Sigmoid colon (tissue), 7 donors: ENCODE measurements at regions of chr4 and their contacts with region 1.

Region 1: GRCh38 chr4:185656467-185656931 is 121.2 kb upstream of the PDLIM3 start:
- DNase-seq: peak; percentile 90
- H3K4me3 ChIP-seq: peak overlapping the region; percentile 56 to 61 (median 56)
- H3K27ac ChIP-seq: peak overlapping the region; percentile 80 to 88 (median 85)
- H3K4me1 ChIP-seq: peaks cover 0 to 53% (median 47%) of the 10 kb centered on the region in 4 donors
- H3K27me3 ChIP-seq: no peaks in the 10 kb centered on the region
- CTCF ChIP-seq: peak; percentile 52 to 66 (median 64)
- EP300 ChIP-seq: no peak
- POLR2A ChIP-seq: peak; percentile 61 to 66

Region 2: GRCh38 chr4:185500035-185500434 is 156.5 kb before region 1 on chr4:
- intact Hi-C with region 1: no loop called
- DNase-seq: no peak
- H3K4me3 ChIP-seq: no peak overlapping the region
- H3K27ac ChIP-seq: peak overlapping the region in 1 of 4 donors; percentile 17
- H3K4me1 ChIP-seq: peaks cover 0 to 12% (median 5%) of the 10 kb centered on the region in 4 donors
- H3K27me3 ChIP-seq: no peaks in the 10 kb centered on the region
- CTCF ChIP-seq: no peak
- EP300 ChIP-seq: no peak
- POLR2A ChIP-seq: no peak

Region 3: DNA sequence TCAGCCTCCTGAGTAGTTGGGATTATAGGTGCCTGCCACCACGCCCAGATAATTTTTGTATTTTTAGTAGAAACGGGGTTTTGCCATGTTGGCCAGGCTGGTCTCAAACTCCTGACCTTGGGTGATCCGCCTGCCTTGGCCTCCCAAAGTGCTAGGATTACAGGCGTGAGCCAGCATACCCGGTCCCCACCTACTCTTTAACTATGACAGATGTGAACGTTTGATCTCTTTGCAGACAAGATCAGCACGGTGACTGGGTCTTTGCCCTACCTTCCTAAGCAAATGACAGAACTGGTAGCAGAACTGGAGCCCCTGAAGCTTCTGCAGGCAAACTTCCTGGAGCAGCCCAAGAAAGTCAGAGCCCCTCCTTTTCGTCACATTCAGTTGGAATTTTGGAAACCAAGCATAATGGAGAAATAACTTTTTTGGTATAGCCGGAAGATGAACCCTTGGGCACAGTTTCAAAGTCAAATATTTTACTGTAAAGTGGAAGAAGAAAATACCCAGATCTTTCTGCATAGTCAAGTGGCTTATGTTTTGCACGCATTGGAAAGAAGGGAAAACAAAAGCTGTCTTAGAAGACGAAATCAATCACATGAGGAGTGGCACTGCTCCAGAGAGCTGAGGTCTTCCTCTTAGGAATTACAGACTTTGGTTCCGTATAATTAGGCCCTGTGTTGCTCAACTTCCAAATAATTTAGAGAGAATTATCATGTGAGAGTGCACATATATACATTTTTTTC is 64.9 kb after region 1 on chr4:
- intact Hi-C with region 1: loop called (anchors 5 kb)
- DNase-seq: no peak
- H3K4me3 ChIP-seq: no peak overlapping the region
- H3K27ac ChIP-seq: peak overlapping the region; percentile 77 to 88 (median 82)
- H3K4me1 ChIP-seq: peaks cover 0 to 98% (median 64%) of the 10 kb centered on the region in 4 donors
- H3K27me3 ChIP-seq: no peaks in the 10 kb centered on the region
- CTCF ChIP-seq: no peak
- EP300 ChIP-seq: no peak
- POLR2A ChIP-seq: no peak

Region 4: DNA sequence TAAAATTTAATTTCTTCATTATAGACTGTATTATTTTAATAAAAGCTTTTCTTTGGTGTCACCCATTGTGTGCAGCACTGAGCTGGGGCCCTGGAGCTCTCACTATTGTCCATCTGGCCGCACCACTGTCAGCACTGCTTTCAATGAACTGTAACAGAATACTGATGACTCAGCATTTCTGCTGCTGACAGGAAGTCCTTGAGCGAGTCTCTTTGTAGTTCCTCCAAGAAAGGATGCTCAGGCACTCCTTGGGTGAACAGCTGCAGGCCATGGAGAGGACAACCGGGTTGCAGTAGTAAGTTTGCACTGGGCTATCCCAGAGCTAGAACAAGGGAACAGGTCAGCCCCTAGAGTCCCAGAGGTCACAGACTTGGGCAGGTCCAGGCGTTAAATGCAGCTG is 73.9 kb after region 1 on chr4:
- intact Hi-C with region 1: loop called (anchors 2 kb)
- DNase-seq: no peak
- H3K4me3 ChIP-seq: no peak overlapping the region
- H3K27ac ChIP-seq: peak overlapping the region; percentile 81 to 88 (median 84)
- H3K4me1 ChIP-seq: peaks cover 0 to 75% (median 55%) of the 10 kb centered on the region in 4 donors
- H3K27me3 ChIP-seq: no peaks in the 10 kb centered on the region
- CTCF ChIP-seq: no peak
- EP300 ChIP-seq: no peak
- POLR2A ChIP-seq: no peak

Region 5: GRCh38 chr4:185811509-185812364 is 155.2 kb after region 1 on chr4 and contains the start of gene SORBS2:
- intact Hi-C with region 1: loop called (anchors 2 kb)
- DNase-seq: peak; percentile 73
- H3K4me3 ChIP-seq: peak within 1 kb of the TSS; percentile 42 to 62 (median 56)
- H3K27ac ChIP-seq: peak within 1 kb of the TSS; percentile 30 to 87 (median 82)
- H3K4me1 ChIP-seq: peaks cover 0 to 19% (median 7%) of the 10 kb centered on the region in 4 donors
- H3K27me3 ChIP-seq: no peaks in the 10 kb centered on the region
- CTCF ChIP-seq: no peak
- EP300 ChIP-seq: no peak
- POLR2A ChIP-seq: no peak
- total RNA-seq, gene SORBS2: 849 to 1,032 (median 869) TPM